Motor neuron (in vitro differentiated cells): ENCODE measurements at regions of chr17 and their contacts with region 1.

Region 1: DNA sequence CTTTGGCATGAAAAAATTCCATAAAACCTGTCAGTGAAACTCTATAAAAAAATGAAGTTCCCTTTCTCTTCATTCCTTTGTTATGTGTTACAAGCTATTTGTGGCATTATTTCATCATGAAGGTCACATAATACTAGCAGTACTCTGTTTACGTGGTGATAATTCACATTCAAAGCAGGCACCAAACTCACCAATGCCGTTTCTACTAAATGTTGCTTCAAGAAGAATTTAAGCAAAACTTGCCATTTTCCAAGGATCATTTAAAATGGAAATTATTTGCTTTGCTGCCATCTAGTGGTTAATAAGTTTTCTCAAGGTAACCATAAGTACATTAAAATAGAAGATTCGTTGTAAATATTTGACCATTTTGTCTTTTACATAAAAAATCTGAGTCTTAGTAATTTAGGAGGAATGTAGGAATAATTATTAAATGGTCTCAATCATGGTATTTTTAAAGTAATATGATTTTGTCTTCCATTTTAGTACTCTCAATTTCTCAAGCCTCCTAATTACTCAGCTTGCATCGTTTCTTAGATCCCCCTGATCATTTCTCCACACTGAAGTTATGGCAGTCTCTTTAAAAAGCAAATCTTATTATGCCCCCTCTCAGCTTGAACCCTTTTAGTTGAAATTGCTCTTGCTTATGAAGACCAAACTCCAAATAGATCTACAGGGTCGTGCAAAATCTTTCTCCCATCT is 80.8 kb downstream of the OMG start:
- ATAC-seq: peak in 1 of 8 experiments; percentile 26
- H3K4me3 ChIP-seq: no peak overlapping the region
- H3K27ac ChIP-seq: no peak overlapping the region
- H3K4me1 ChIP-seq: no peaks in the 10 kb centered on the region

Region 2: DNA sequence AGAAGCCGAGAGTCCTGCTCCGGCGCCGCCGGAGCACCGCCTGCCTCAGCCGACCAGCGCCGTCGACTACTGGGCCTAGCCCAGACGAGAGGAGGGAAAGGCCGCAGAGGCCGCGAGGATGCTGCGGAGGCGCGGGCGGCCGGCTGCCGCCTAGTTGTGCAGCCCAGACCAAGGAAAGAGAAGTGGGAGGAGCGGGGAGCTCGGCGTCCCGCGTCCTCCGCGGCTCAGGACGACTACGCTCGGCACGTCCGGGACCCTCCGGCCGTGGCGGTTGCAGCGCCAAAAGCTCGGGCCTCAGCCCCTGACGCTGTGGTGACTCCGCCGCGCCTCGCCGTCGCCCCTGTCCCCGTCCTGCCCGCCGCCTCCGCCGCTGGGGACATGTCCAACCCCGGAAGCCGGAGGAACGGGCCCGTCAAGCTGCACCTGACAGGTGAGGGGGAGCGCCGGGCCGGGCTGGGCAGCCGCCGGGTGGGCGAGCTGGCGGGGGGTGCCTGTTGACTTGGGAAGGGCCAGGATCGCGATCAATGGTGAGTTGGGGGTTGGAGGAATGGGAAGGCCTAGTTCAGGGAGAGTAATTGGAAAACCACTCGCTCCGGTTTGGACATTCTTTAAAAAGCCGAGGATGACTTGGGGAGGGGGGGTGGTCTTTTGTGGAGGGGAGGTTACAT is 207.7 kb before region 1 on chr17:
- in situ Hi-C with region 1: loop called in 2 of 9 experiments (anchors 25 kb)
- ATAC-seq: peak in 7 of 8 experiments; percentile 44 to 98 (median 78)
- H3K4me3 ChIP-seq: peak overlapping the region; percentile 17 to 36 (median 28)
- H3K27ac ChIP-seq: no peak overlapping the region
- H3K4me1 ChIP-seq: no peaks in the 10 kb centered on the region

Region 3: DNA sequence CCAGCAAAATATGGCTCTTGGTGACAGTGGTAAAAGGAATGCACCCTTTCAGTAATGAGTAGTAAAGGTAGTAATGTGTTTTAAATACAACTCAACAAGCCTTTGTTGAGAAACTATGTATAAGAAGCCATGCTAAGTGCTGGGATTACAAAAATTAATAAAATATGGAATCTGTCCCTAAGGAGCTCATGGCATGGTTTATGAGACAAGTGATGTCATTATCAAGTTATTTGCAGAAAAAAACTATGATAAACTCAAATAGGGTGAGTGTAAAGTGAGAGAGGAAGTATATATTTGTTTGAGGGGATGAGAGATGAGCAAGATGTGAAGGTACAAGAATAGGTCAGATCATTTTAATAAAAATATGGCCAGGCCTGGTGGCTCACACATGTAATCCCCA is 44.5 kb before region 1 on chr17:
- in situ Hi-C with region 1: no loop called
- ATAC-seq: no peak
- H3K4me3 ChIP-seq: no peak overlapping the region
- H3K27ac ChIP-seq: no peak overlapping the region
- H3K4me1 ChIP-seq: no peaks in the 10 kb centered on the region